Activated CD4-positive, alpha-beta T cell treated with anti-CD3 and anti-CD28 coated beads for 36 hours (primary cell): ENCODE measurements at regions of chr7 and their contacts with region 1.

Region 1: GRCh38 chr7:150356265-150356897 is 12.2 kb upstream of the REPIN1 start:
- DNase-seq: peak; percentile 41
- ATAC-seq: no peak
- H3K4me3 Mint-ChIP-seq: no peak overlapping the region
- H3K27ac Mint-ChIP-seq: peak overlapping the region; percentile 2
- H3K4me1 Mint-ChIP-seq: peaks cover 34% of the 10 kb centered on the region
- H3K27me3 Mint-ChIP-seq: no peaks in the 10 kb centered on the region

Region 2: DNA sequence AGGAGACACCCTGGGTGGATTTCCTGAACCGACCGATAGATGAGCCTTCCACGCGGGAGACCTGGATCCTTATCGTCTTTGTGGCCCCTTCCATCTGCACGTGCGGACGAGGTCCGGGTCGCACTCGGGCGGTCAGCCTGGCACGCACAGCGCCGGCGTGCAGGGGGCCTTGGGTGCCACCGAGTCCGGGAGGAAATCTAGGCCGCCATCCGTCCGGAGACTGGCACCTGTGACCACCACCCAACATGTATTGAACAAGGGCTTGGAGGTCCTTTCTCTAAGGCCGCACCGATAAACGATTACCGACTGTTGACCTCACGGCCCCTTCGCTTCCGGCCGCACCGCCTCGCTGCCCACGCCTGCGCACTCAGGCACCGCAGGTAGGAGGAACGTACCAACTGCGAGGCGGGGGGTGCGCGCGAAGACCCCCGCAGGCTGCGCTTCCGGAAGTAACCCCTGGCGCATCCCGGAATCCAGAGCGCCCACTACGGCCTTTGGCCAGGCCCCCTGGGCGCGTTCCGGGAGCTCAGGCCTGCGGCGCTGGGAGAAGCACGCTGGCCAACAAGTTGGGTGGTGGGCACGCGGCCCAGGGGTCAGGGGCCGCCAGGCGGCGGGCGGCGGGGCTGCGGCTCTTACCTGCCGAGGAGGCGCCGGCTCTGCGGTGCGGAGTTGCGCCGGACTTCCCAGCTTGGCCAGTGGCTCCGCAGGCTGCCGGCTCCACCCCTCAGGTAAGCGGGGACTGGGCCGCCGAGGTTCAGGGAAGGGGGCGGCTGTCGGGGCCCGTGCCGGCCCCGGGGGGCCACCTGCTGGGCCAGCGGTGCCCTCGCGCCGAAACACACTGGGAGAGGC is 33.3 kb before region 1 on chr7 and contains the starts of genes ACTR3C and LRRC61:
- CTCF ChIA-PET with region 1: interaction called, 3 read pairs
- POLR2A ChIA-PET with region 1: no interaction called
- intact Hi-C with region 1: loop called (anchors 2 to 5 kb)
- DNase-seq: peak; percentile 78
- ATAC-seq: peak; percentile 24
- H3K4me3 Mint-ChIP-seq: peak within 1 kb of the TSS; percentile 91
- H3K27ac Mint-ChIP-seq: peak within 1 kb of the TSS; percentile 99
- H3K4me1 Mint-ChIP-seq: peaks cover 52% of the 10 kb centered on the region
- H3K27me3 Mint-ChIP-seq: no peaks in the 10 kb centered on the region
- total RNA-seq, gene ACTR3C: 3.2 to 4.7 TPM
- total RNA-seq, gene LRRC61: 13.0 to 17.4 TPM

Region 3: GRCh38 chr7:150345012-150345411 is 11.4 kb before region 1 on chr7:
- CTCF ChIA-PET with region 1: interaction called, 11 read pairs
- POLR2A ChIA-PET with region 1: no interaction called
- intact Hi-C with region 1: no loop called
- DNase-seq: no peak
- ATAC-seq: no peak
- H3K4me3 Mint-ChIP-seq: no peak overlapping the region
- H3K27ac Mint-ChIP-seq: no peak overlapping the region
- H3K4me1 Mint-ChIP-seq: peaks cover 2% of the 10 kb centered on the region
- H3K27me3 Mint-ChIP-seq: peaks cover 20% of the 10 kb centered on the region

Region 4: DNA sequence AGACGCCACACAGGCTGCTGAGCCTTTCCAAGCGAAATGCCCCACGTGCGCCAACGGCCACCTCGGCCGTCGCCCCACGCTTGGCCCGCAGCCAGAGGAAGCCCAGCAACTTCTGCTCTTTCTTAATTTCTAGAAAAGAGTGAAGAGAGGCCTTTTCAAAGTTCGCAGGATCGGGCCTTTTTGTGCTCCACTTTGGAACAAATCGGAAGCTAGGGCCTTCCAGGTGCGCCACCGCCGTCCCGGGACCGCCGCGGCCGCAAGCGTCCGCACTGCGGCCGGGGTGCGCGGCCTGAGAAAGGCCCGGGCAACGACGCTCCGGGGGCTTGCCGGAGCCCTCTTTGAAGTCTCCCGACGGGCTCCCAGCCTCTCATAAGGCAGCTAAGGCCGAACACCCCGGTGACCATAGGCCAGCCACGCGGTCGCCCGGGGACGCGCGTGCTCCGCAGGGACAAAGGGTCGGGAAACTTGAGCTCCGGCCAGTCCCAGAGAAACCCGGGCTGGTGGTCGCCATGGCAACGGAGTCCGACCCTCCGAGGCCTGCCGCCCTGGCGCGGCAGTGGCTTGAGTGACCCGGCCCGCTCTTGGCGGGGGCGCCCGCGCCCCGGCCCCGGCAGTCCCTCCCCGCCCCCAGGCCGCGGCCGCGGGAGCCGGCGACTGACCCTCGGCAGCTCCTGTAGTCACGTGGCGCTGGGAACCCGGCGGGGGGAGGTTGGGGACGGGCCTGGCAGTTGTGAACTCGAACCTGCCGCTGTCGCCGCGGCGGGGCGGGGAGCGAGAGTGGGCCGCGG is 11.9 kb after region 1 on chr7 and contains the start of gene REPIN1:
- CTCF ChIA-PET with region 1: interaction called, 7 read pairs
- POLR2A ChIA-PET with region 1: interaction called, 4 read pairs
- intact Hi-C with region 1: loop called in 1 of 2 experiments (anchors 2 kb)
- DNase-seq: peak; percentile 88
- ATAC-seq: peak; percentile 63
- H3K4me3 Mint-ChIP-seq: peak within 1 kb of the TSS; percentile 90
- H3K27ac Mint-ChIP-seq: peak within 1 kb of the TSS; percentile 97
- H3K4me1 Mint-ChIP-seq: peaks cover 37% of the 10 kb centered on the region
- H3K27me3 Mint-ChIP-seq: no peaks in the 10 kb centered on the region
- total RNA-seq, gene REPIN1: 48.2 to 55.6 TPM

Region 5: GRCh38 chr7:150404805-150405583 is 48.6 kb after region 1 on chr7:
- CTCF ChIA-PET with region 1: interaction called, 8 read pairs
- POLR2A ChIA-PET with region 1: no interaction called
- intact Hi-C with region 1: loop called in 1 of 2 experiments (anchors 1 kb)
- DNase-seq: peak; percentile 85
- ATAC-seq: peak; percentile 74
- H3K4me3 Mint-ChIP-seq: peak overlapping the region; percentile 90
- H3K27ac Mint-ChIP-seq: peak overlapping the region; percentile 91
- H3K4me1 Mint-ChIP-seq: peaks cover 49% of the 10 kb centered on the region
- H3K27me3 Mint-ChIP-seq: no peaks in the 10 kb centered on the region

Region 6: GRCh38 chr7:150420987-150421674 is 64.8 kb after region 1 on chr7:
- CTCF ChIA-PET with region 1: interaction called, 5 read pairs
- POLR2A ChIA-PET with region 1: no interaction called
- intact Hi-C with region 1: loop called (anchors 1 kb)
- DNase-seq: peak; percentile 93
- ATAC-seq: peak; percentile 100
- H3K4me3 Mint-ChIP-seq: no peak overlapping the region
- H3K27ac Mint-ChIP-seq: peak overlapping the region; percentile 2
- H3K4me1 Mint-ChIP-seq: peaks cover 5% of the 10 kb centered on the region
- H3K27me3 Mint-ChIP-seq: no peaks in the 10 kb centered on the region